ENCODE measurements at regions of chr22 and their contacts with region 1.

Region 1: DNA sequence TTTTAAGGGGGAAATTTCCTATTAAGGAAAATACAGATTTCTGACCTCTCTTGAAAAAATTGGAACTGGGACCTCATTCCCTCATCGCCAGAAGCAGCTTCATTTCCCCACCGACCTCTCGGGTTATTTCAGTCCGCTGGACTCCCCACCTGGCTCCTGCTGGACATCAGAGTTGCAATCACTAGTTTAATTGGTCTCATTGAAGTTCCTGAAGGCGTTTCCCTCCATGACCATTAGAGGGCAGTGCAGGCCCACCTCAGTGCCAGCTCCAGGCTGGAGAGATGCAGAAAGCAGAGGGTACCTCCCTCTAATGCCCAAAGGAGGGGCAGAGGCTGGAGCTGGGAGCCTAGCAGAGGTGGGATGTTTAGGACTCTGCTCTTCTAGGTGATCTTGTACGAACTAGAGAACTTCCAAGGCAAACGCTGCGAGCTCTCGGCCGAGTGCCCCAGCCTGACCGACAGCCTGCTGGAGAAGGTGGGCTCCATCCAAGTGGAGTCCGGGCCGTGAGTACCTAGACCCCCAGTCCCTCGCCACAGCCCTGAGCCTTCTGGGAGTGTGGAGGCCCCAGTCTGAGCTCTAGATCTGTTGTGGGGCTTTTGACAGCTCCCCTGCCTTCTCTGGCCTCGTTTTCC is 2.7 kb downstream of the CRYBB3 start:
- DNase-seq: peak; percentile 57 to 69
- ATAC-seq: peak; percentile 78 to 91
- H3K4me3 ChIP-seq: no peak overlapping the region
- H3K27ac ChIP-seq: no peak overlapping the region
- H3K4me1 ChIP-seq: no peaks in the 10 kb centered on the region
- CTCF ChIP-seq: peak; percentile 59
- EP300 ChIP-seq: no peak
- POLR2A ChIP-seq: no peak
- RAD21 ChIP-seq: peak; percentile 63 to 73

Region 2: GRCh38 chr22:25192406-25192805 is 10.0 kb before region 1 on chr22:
- CTCF ChIA-PET with region 1: interaction called, 16 read pairs
- POLR2A ChIA-PET with region 1: no interaction called
- DNase-seq: no peak
- ATAC-seq: no peak
- H3K4me3 ChIP-seq: no peak overlapping the region
- H3K27ac ChIP-seq: no peak overlapping the region
- H3K4me1 ChIP-seq: no peaks in the 10 kb centered on the region
- CTCF ChIP-seq: no peak
- EP300 ChIP-seq: no peak
- POLR2A ChIP-seq: no peak
- RAD21 ChIP-seq: no peak

Region 3: DNA sequence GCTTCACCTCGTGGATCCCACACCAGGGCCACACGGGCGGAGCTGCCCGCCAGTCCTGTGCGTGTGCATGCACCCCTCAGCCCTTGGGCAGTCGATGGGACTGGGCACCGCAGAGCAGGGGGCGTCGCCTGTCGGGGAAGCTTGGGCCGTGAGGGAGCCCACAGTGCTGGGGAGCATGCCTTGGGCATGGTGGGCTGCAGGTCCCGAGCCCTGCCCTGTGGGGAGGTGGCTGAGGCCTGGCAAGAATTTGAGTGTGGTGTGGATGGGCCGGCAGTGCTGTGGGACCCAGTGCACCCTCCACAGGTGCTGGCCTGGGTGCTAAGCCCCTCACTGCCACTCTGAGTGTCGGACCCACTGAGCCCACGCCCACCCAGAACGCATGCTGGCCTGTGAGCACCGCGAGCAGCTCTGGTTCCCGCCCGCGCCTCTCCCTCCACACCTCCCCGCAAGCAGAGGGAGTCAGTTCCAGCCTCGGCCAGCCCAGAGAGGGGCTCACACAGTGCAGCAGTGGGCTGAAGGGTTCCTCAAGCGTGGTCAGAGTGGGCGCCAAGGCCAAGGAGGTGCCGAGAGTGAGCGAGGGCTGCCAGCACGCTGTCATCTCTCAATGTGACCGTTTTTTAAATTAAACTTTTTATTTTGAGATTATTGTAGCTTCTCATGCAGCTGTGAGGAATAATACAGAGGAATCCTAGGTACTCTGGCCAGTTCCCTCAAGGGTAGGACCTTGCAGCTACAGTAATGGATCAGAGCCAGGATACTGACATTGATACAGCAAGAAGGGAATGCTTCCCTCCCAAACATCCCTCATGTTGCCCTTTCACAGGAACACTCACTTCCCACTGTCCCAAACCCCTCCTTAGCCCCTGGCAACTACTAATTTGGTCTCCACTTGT is 144.7 kb after region 1 on chr22:
- CTCF ChIA-PET with region 1: no interaction called
- POLR2A ChIA-PET with region 1: no interaction called
- DNase-seq: no peak
- ATAC-seq: no peak
- H3K4me3 ChIP-seq: no peak overlapping the region
- H3K27ac ChIP-seq: no peak overlapping the region
- H3K4me1 ChIP-seq: no peaks in the 10 kb centered on the region
- CTCF ChIP-seq: no peak
- EP300 ChIP-seq: no peak
- POLR2A ChIP-seq: no peak
- RAD21 ChIP-seq: no peak

Region 4: GRCh38 chr22:25942856-25943411 is 740.5 kb after region 1 on chr22:
- CTCF ChIA-PET with region 1: no interaction called
- POLR2A ChIA-PET with region 1: no interaction called
- DNase-seq: peak in 1 of 2 experiments; percentile 5
- ATAC-seq: no peak
- H3K4me3 ChIP-seq: no peak overlapping the region
- H3K27ac ChIP-seq: no peak overlapping the region
- H3K4me1 ChIP-seq: no peaks in the 10 kb centered on the region
- CTCF ChIP-seq: no peak
- EP300 ChIP-seq: no peak
- POLR2A ChIP-seq: no peak
- RAD21 ChIP-seq: no peak